ENCODE measurements at regions of chr13 and their contacts with region 1.

Region 1: DNA sequence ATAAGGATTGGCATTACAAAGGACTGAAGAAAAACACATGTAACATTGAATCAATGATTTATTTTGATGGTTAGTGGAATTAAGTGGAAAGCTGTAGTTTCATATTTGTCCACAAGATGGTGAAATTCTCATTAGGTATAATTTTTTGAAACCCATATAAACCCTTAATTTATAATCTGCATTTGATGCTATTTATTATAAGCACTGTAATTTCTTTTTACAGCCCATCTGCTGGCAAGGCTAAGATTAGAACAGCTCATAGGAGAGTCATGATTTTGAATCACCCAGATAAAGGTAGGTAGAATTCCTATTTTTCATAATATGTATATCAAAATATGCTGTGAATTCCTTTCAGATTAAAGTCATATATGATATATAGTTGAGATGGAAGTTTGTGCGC is 62.2 kb downstream of the DNAJC15 start:
- DNase-seq: no peak
- ATAC-seq: no peak
- H3K4me3 Mint-ChIP-seq: no peak overlapping the region
- H3K27ac Mint-ChIP-seq: no peak overlapping the region
- H3K4me1 Mint-ChIP-seq: peaks cover 16% of the 10 kb centered on the region
- H3K27me3 Mint-ChIP-seq: no peaks in the 10 kb centered on the region

Region 2: DNA sequence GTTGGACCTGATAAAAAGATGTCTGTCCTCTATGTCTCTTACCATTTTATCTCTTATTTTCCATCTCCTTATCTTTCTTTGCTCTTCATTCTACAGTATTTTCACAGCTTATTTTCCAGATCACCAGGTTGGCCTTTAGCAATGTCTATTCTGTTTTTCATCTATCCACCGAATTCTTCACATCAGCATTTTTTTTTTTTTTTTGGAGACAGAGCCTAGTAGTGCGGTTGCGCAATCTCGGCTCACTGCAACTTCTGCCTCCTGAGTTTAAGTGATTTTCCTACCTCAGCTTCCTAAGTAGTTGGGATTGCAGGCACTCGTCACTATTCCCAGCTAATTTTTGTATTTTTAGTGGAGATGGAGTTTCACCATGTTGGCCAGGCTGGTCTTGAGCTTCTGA is 13.2 kb before region 1 on chr13:
- CTCF ChIA-PET with region 1: interaction called, 11 read pairs
- POLR2A ChIA-PET with region 1: no interaction called
- intact Hi-C with region 1: no loop called
- DNase-seq: no peak
- ATAC-seq: no peak
- H3K4me3 Mint-ChIP-seq: no peak overlapping the region
- H3K27ac Mint-ChIP-seq: no peak overlapping the region
- H3K4me1 Mint-ChIP-seq: peaks cover 43% of the 10 kb centered on the region
- H3K27me3 Mint-ChIP-seq: no peaks in the 10 kb centered on the region

Measured in activated CD4-positive, alpha-beta T cell treated with anti-CD3 and anti-CD28 coated beads for 36 hours (primary cell).